ENCODE measurements at regions of chr21 and their contacts with region 1.

Region 1: DNA sequence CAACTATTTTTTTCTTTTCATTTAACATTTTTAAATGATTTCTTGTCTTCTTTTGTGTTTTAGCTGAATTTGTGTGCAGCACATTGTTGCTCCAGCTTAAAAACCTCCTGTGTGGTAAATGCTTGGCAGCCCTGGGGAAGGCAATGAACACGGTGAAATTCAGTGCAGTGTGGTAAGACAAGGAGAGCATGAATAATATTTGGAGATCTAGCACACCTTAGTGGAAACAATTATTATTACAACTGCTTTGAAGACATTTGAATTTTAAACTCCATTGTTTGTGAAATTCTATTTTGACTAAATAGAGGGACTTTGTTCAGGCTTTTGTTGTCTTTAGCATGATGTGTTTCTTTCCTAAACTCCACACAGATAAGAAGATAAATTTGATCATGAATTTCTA is 242.6 kb upstream of the CXADR start:
- DNase-seq: peak; percentile 31
- ATAC-seq: peak; percentile 64
- H3K4me3 ChIP-seq: no peak overlapping the region
- H3K27ac ChIP-seq: no peak overlapping the region
- H3K4me1 ChIP-seq: no peaks in the 10 kb centered on the region
- H3K27me3 ChIP-seq: no peaks in the 10 kb centered on the region
- CTCF ChIP-seq: peak; percentile 49
- POLR2A ChIP-seq: no peak
- RAD21 ChIP-seq: peak; percentile 52

Region 2: DNA sequence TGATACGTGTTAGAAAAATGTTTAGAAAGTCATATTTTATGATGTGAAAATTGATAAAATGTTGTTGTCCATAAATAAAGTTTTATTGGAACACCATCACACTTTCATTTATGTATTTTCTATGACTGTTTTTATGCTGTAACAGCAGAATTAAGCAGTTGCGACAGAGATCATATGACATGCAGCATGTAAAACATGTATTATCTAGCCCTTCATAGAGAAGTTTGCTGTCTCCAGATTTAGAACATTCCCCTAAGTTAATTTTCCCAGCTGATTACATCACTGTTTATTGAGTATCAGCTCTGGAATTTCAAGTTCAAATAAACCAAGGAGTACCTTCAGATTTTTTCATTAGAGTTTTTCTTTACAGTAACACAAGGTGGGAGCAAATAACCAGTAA is 747.7 kb before region 1 on chr21:
- CTCF ChIA-PET with region 1: no interaction called
- POLR2A ChIA-PET with region 1: no interaction called
- dilution Hi-C with region 1: no loop called
- in situ Hi-C with region 1: no loop called
- intact Hi-C with region 1: loop called (anchors 5 kb)
- DNase-seq: peak; percentile 83
- ATAC-seq: peak; percentile 75
- H3K4me3 ChIP-seq: no peak overlapping the region
- H3K27ac ChIP-seq: no peak overlapping the region
- H3K4me1 ChIP-seq: no peaks in the 10 kb centered on the region
- H3K27me3 ChIP-seq: no peaks in the 10 kb centered on the region
- CTCF ChIP-seq: no peak
- POLR2A ChIP-seq: no peak
- RAD21 ChIP-seq: peak; percentile 41; the same call in 1 of the 2 replicates

Region 3: GRCh38 chr21:16942703-16943102 is 327.5 kb before region 1 on chr21:
- CTCF ChIA-PET with region 1: no interaction called
- POLR2A ChIA-PET with region 1: no interaction called
- dilution Hi-C with region 1: no loop called
- in situ Hi-C with region 1: no loop called
- intact Hi-C with region 1: loop called (anchors 1 kb)
- DNase-seq: peak; percentile 17
- ATAC-seq: 0 out of 2 replicates have a peak, but pooled peaks have one; percentile 27
- H3K4me3 ChIP-seq: no peak overlapping the region
- H3K27ac ChIP-seq: no peak overlapping the region
- H3K4me1 ChIP-seq: no peaks in the 10 kb centered on the region
- H3K27me3 ChIP-seq: no peaks in the 10 kb centered on the region
- CTCF ChIP-seq: peak; percentile 35
- POLR2A ChIP-seq: no peak
- RAD21 ChIP-seq: peak; percentile 50

Region 4: GRCh38 chr21:17250778-17251241 is 19.4 kb before region 1 on chr21:
- CTCF ChIA-PET with region 1: no interaction called
- POLR2A ChIA-PET with region 1: no interaction called
- dilution Hi-C with region 1: no loop called
- in situ Hi-C with region 1: no loop called
- intact Hi-C with region 1: loop called (anchors 1 kb)
- DNase-seq: no peak
- ATAC-seq: no peak
- H3K4me3 ChIP-seq: no peak overlapping the region
- H3K27ac ChIP-seq: no peak overlapping the region
- H3K4me1 ChIP-seq: no peaks in the 10 kb centered on the region
- H3K27me3 ChIP-seq: no peaks in the 10 kb centered on the region
- CTCF ChIP-seq: no peak
- POLR2A ChIP-seq: no peak
- RAD21 ChIP-seq: no peak

Region 5: DNA sequence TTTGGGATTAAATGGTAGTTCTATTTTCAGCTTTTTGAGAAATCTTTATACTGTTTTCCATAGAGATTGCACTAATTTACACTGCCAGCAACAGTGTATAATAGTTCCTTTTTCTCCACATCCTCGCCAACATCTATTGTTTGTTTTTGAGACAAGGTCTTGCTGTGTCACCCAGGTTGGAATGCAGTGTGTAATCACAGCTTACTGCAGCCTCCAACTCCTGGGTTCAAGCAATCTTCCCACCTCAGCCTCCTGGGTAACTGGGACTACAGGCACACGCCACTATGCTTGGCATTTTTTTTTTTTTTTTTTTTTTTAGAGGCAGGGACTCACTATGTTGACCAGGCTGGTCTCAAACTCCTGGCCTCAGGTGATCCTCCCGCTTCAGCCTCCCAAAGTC is 78.1 kb after region 1 on chr21:
- CTCF ChIA-PET with region 1: interaction called, 10 read pairs
- POLR2A ChIA-PET with region 1: no interaction called
- dilution Hi-C with region 1: no loop called
- in situ Hi-C with region 1: no loop called
- intact Hi-C with region 1: no loop called
- DNase-seq: no peak
- ATAC-seq: no peak
- H3K4me3 ChIP-seq: no peak overlapping the region
- H3K27ac ChIP-seq: no peak overlapping the region
- H3K4me1 ChIP-seq: no peaks in the 10 kb centered on the region
- H3K27me3 ChIP-seq: no peaks in the 10 kb centered on the region
- CTCF ChIP-seq: no peak
- POLR2A ChIP-seq: no peak
- RAD21 ChIP-seq: no peak